Dendritic cell treated with granulocyte-macrophage colony-stimulating factor and Interleukin-4, amounts not matched to agents 40 ng/mL and 50 ng/mL, for 4 days (primary cell): ENCODE measurements at regions of chr1 and their contacts with region 1.

Region 1: GRCh38 chr1:245129319-245130240 is 25.2 kb upstream of the KIF26B start:
- H3K4me3 Mint-ChIP-seq: no peak overlapping the region
- H3K27ac Mint-ChIP-seq: no peak overlapping the region
- H3K4me1 Mint-ChIP-seq: no peaks in the 10 kb centered on the region
- H3K27me3 Mint-ChIP-seq: peaks cover 37% of the 10 kb centered on the region

Region 2: GRCh38 chr1:245051349-245052221 is 78.0 kb before region 1 on chr1:
- intact Hi-C with region 1: no loop called
- H3K4me3 Mint-ChIP-seq: peak overlapping the region; percentile 68
- H3K27ac Mint-ChIP-seq: peak overlapping the region; percentile 46
- H3K4me1 Mint-ChIP-seq: peaks cover 62% of the 10 kb centered on the region
- H3K27me3 Mint-ChIP-seq: no peaks in the 10 kb centered on the region

Region 3: GRCh38 chr1:245091818-245092637 is 37.6 kb before region 1 on chr1:
- intact Hi-C with region 1: no loop called
- H3K4me3 Mint-ChIP-seq: no peak overlapping the region
- H3K27ac Mint-ChIP-seq: no peak overlapping the region
- H3K4me1 Mint-ChIP-seq: no peaks in the 10 kb centered on the region
- H3K27me3 Mint-ChIP-seq: no peaks in the 10 kb centered on the region

Region 4: GRCh38 chr1:245156081-245156735 is 26.6 kb after region 1 on chr1:
- intact Hi-C with region 1: no loop called
- H3K4me3 Mint-ChIP-seq: peak overlapping the region; percentile 71
- H3K27ac Mint-ChIP-seq: peak overlapping the region; percentile 47
- H3K4me1 Mint-ChIP-seq: peaks cover 34% of the 10 kb centered on the region
- H3K27me3 Mint-ChIP-seq: peaks cover 84% of the 10 kb centered on the region

Region 5: GRCh38 chr1:245290836-245291235 is 161.3 kb after region 1 on chr1:
- intact Hi-C with region 1: no loop called
- H3K4me3 Mint-ChIP-seq: no peak overlapping the region
- H3K27ac Mint-ChIP-seq: no peak overlapping the region
- H3K4me1 Mint-ChIP-seq: peaks cover 12% of the 10 kb centered on the region
- H3K27me3 Mint-ChIP-seq: peaks cover 87% of the 10 kb centered on the region

Region 6: DNA sequence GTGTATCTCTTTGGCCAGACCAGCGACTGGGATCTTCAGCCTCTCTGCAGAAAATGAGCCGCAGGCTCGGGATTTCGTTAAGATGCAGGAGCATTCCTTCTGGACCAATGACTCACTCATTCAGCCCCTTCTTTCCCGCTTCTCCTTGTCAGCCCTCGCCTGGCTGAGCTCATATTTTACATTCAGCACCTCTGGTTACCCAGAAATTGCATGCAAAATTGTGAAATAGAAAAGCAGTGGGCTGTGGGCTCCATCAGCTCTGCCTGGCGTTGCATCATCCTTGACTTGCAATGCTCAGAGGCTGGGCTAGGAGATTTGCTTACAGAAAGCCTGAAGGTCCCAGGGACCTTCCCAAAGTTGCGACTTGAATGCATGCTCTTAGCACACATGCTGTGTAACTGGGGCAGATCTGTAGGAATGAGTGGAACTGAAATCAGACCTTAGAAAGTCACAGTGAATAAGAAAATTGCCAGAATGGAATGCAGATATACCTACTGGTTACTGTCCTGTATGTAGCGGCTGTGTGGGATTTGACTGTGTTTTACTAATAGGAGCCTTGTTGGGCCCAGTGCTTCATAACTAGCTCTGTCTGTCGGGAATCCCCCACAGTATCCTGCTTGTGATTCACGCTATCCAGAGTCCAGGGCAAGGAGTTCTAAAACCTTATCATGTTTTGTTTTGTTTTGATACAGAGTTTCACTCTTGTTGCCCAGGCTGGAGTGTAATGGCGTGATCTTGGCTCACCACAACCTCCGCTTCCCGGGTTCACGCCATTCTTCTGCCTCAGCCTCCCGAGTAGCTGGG is 470.0 kb after region 1 on chr1:
- intact Hi-C with region 1: loop called (anchors 5 kb)
- H3K4me3 Mint-ChIP-seq: no peak overlapping the region
- H3K27ac Mint-ChIP-seq: no peak overlapping the region
- H3K4me1 Mint-ChIP-seq: no peaks in the 10 kb centered on the region
- H3K27me3 Mint-ChIP-seq: peaks cover 6% of the 10 kb centered on the region